CD8-positive, alpha-beta T cell (primary cell): ENCODE measurements at regions of chr3 and their contacts with region 1.

Region 1: GRCh38 chr3:136250226-136250902 is at the start of gene PCCB:
- DNase-seq: peak; percentile 84 to 95 (median 90)
- ATAC-seq: peak; percentile 96
- H3K4me3 ChIP-seq: peak within 1 kb of the TSS; percentile 88 to 93
- H3K4me3 Mint-ChIP-seq: peak within 1 kb of the TSS; percentile 94
- H3K27ac ChIP-seq: peak within 1 kb of the TSS; percentile 74 to 89
- H3K27ac Mint-ChIP-seq: peak within 1 kb of the TSS; percentile 85
- H3K4me1 ChIP-seq: peaks cover 16% of the 10 kb centered on the region
- H3K4me1 Mint-ChIP-seq: peaks cover 23% of the 10 kb centered on the region
- H3K27me3 ChIP-seq: no peaks in the 10 kb centered on the region
- H3K27me3 Mint-ChIP-seq: no peaks in the 10 kb centered on the region
- CTCF ChIP-seq: peak; percentile 91
- total RNA-seq, gene PCCB: 12.3 to 15.8 TPM

Region 2: GRCh38 chr3:136142592-136142991 is 107.8 kb before region 1 on chr3:
- CTCF ChIA-PET with region 1: no interaction called
- POLR2A ChIA-PET with region 1: no interaction called
- intact Hi-C with region 1: loop called in 1 of 2 experiments (anchors 5 kb)
- DNase-seq: peak in 2 of 9 experiments; percentile 21 to 48
- ATAC-seq: peak; percentile 68
- H3K4me3 ChIP-seq: no peak overlapping the region
- H3K4me3 Mint-ChIP-seq: no peak overlapping the region
- H3K27ac ChIP-seq: no peak overlapping the region
- H3K27ac Mint-ChIP-seq: peak overlapping the region; percentile 64
- H3K4me1 ChIP-seq: peaks cover 4% of the 10 kb centered on the region
- H3K4me1 Mint-ChIP-seq: peaks cover 31% of the 10 kb centered on the region
- H3K27me3 ChIP-seq: no peaks in the 10 kb centered on the region
- H3K27me3 Mint-ChIP-seq: no peaks in the 10 kb centered on the region
- CTCF ChIP-seq: no peak

Region 3: GRCh38 chr3:136149667-136150066 is 100.7 kb before region 1 on chr3:
- CTCF ChIA-PET with region 1: no interaction called
- POLR2A ChIA-PET with region 1: no interaction called
- intact Hi-C with region 1: loop called (anchors 5 kb)
- DNase-seq: no peak
- ATAC-seq: no peak
- H3K4me3 ChIP-seq: no peak overlapping the region
- H3K4me3 Mint-ChIP-seq: no peak overlapping the region
- H3K27ac ChIP-seq: no peak overlapping the region
- H3K27ac Mint-ChIP-seq: no peak overlapping the region
- H3K4me1 ChIP-seq: peaks cover 24% of the 10 kb centered on the region
- H3K4me1 Mint-ChIP-seq: peaks cover 67% of the 10 kb centered on the region
- H3K27me3 ChIP-seq: no peaks in the 10 kb centered on the region
- H3K27me3 Mint-ChIP-seq: no peaks in the 10 kb centered on the region
- CTCF ChIP-seq: no peak

Region 4: GRCh38 chr3:136281966-136282520 is 31.7 kb after region 1 on chr3:
- CTCF ChIA-PET with region 1: no interaction called
- POLR2A ChIA-PET with region 1: no interaction called
- intact Hi-C with region 1: no loop called
- DNase-seq: no peak
- ATAC-seq: no peak
- H3K4me3 ChIP-seq: no peak overlapping the region
- H3K4me3 Mint-ChIP-seq: no peak overlapping the region
- H3K27ac ChIP-seq: no peak overlapping the region
- H3K27ac Mint-ChIP-seq: no peak overlapping the region
- H3K4me1 ChIP-seq: no peaks in the 10 kb centered on the region
- H3K4me1 Mint-ChIP-seq: peaks cover 11% of the 10 kb centered on the region
- H3K27me3 ChIP-seq: no peaks in the 10 kb centered on the region
- H3K27me3 Mint-ChIP-seq: no peaks in the 10 kb centered on the region
- CTCF ChIP-seq: no peak

Region 5: GRCh38 chr3:136861890-136862616 is 611.7 kb after region 1 on chr3 and contains the start of gene NCK1:
- CTCF ChIA-PET with region 1: no interaction called
- POLR2A ChIA-PET with region 1: no interaction called
- intact Hi-C with region 1: loop called (anchors 2 to 5 kb)
- DNase-seq: peak; percentile 97 to 100 (median 99)
- ATAC-seq: peak; percentile 93
- H3K4me3 ChIP-seq: peak within 1 kb of the TSS; percentile 76 to 92
- H3K4me3 Mint-ChIP-seq: peak within 1 kb of the TSS; percentile 90
- H3K27ac ChIP-seq: peak within 1 kb of the TSS; percentile 86 to 96
- H3K27ac Mint-ChIP-seq: peak within 1 kb of the TSS; percentile 98
- H3K4me1 ChIP-seq: peaks cover 23% of the 10 kb centered on the region
- H3K4me1 Mint-ChIP-seq: peaks cover 63% of the 10 kb centered on the region
- H3K27me3 ChIP-seq: no peaks in the 10 kb centered on the region
- H3K27me3 Mint-ChIP-seq: no peaks in the 10 kb centered on the region
- CTCF ChIP-seq: no peak
- total RNA-seq, gene NCK1: 54.8 to 68.7 TPM

Region 6: DNA sequence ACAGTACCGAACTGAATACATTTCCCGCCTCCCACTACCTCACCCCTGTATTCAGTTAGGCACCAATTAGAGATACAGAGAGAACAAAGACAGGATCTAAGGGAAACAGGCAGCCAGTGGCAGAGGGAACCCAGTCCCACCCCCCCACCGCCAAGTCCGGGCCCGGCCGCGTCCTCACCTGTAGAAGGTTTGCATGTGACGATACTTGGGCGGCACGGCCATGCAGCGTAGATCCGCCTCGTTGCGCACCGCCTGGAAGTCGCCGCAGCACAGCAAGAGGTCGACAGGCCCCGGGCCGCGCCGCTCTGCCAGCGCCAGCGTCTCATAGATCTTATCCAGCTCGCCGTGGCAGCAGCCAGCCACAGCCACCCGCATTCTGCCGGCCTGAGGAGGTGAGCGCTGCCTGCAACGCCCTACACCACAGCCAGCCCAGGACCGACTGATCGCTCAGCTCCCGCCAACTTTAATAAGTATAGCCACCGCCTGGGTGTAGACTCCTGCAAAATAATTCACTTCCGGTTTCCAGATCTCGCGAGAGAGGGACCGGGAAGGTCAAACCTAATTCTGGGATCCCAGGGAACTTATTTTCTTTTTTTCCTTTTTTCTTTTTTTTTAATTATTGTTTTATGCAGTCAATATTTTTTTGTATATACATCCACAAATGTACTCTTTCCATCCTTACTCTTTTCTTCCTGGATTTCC is 1924.2 kb after region 1 on chr3 and contains the start of gene DBR1:
- CTCF ChIA-PET with region 1: no interaction called
- POLR2A ChIA-PET with region 1: no interaction called
- intact Hi-C with region 1: loop called in 1 of 2 experiments (anchors 5 kb)
- DNase-seq: peak; percentile 51 to 89 (median 74)
- ATAC-seq: peak; percentile 87
- H3K4me3 ChIP-seq: peak within 1 kb of the TSS; percentile 76
- H3K4me3 Mint-ChIP-seq: peak within 1 kb of the TSS; percentile 99
- H3K27ac ChIP-seq: peak within 1 kb of the TSS; percentile 71 to 79
- H3K27ac Mint-ChIP-seq: peak within 1 kb of the TSS; percentile 98
- H3K4me1 ChIP-seq: peaks cover 21% of the 10 kb centered on the region
- H3K4me1 Mint-ChIP-seq: peaks cover 40% of the 10 kb centered on the region
- H3K27me3 ChIP-seq: no peaks in the 10 kb centered on the region
- H3K27me3 Mint-ChIP-seq: no peaks in the 10 kb centered on the region
- CTCF ChIP-seq: no peak
- total RNA-seq, gene DBR1: 31.2 to 31.9 TPM